ENCODE measurements at regions of chr2 and their contacts with region 1.

Region 1: DNA sequence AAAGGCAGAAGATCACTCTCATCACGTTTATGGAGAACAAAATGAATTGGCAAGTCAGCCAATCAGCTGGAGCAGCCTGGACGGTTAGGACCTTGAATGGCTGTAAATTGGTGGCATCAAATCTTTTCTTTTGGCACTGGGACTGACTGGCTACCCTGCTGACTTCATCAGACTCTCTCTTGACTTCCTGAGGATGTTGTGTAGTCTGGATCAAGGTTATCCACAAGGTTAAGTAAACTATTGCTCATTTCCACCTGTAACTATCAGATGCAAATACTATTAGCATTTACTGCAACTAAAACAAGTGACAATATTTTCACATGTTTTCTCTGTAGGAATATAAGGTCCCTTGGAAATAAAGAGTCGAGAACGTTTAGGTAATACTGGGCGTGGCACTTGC is 134.3 kb upstream of the RASGRP3 start:
- DNase-seq: peak; percentile 98
- H3K4me3 ChIP-seq: no peak overlapping the region
- H3K27ac ChIP-seq: peak overlapping the region; percentile 99
- H3K4me1 ChIP-seq: peaks cover 28% of the 10 kb centered on the region
- H3K27me3 ChIP-seq: no peaks in the 10 kb centered on the region
- CTCF ChIP-seq: no peak
- POLR2A ChIP-seq: peak; percentile 40

Region 2: DNA sequence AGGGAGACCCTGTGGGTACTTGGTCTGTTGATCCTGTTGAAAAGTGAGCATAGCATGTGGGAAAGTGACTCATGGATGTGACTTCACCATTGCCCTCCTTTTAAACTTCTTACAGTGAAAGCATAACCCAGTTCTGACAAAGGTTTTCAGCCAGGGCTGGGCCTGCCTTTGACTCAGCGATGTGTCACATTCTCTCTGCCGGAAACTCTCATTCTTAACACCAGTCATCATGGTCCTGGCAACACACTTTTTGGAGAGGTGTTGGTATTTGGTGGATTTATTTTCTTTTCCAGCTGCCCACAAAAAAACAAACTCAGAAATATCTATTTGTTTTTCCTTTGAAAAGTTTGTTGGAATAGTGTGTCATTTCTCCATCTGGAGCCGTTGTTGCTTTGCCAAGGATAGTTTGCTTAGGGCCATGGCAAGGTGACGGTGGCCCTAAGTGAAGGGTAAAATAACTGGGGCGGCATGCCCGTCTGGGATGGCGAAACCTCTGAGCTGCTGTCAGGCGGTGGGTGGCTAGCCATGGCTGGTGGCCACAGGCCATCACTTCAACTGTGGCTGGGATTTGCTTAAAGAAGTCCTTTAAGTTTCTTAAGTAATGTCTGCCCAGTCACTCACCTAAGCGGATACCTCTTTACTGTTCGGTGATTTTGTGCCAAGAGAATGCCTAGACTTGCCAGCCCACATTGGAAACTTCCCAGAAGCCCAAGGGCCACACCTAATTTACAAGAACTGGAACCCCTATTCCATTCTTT is 272.1 kb before region 1 on chr2:
- CTCF ChIA-PET with region 1: no interaction called
- POLR2A ChIA-PET with region 1: no interaction called
- dilution Hi-C with region 1: no loop called
- intact Hi-C with region 1: loop called (anchors 2 kb)
- DNase-seq: peak; percentile 98
- H3K4me3 ChIP-seq: no peak overlapping the region
- H3K27ac ChIP-seq: peak overlapping the region; percentile 98
- H3K4me1 ChIP-seq: peaks cover 60% of the 10 kb centered on the region
- H3K27me3 ChIP-seq: no peaks in the 10 kb centered on the region
- CTCF ChIP-seq: no peak
- POLR2A ChIP-seq: no peak

Region 3: GRCh38 chr2:33126958-33127357 is 215.2 kb before region 1 on chr2:
- CTCF ChIA-PET with region 1: no interaction called
- POLR2A ChIA-PET with region 1: no interaction called
- dilution Hi-C with region 1: no loop called
- intact Hi-C with region 1: no loop called
- DNase-seq: no peak
- H3K4me3 ChIP-seq: no peak overlapping the region
- H3K27ac ChIP-seq: no peak overlapping the region
- H3K4me1 ChIP-seq: no peaks in the 10 kb centered on the region
- H3K27me3 ChIP-seq: no peaks in the 10 kb centered on the region
- CTCF ChIP-seq: no peak
- POLR2A ChIP-seq: no peak

Region 4: GRCh38 chr2:33167622-33168250 is 174.4 kb before region 1 on chr2:
- CTCF ChIA-PET with region 1: no interaction called
- POLR2A ChIA-PET with region 1: no interaction called
- dilution Hi-C with region 1: no loop called
- intact Hi-C with region 1: no loop called
- DNase-seq: no peak
- H3K4me3 ChIP-seq: no peak overlapping the region
- H3K27ac ChIP-seq: no peak overlapping the region
- H3K4me1 ChIP-seq: peaks cover 16% of the 10 kb centered on the region
- H3K27me3 ChIP-seq: no peaks in the 10 kb centered on the region
- CTCF ChIP-seq: no peak
- POLR2A ChIP-seq: no peak

Region 5: DNA sequence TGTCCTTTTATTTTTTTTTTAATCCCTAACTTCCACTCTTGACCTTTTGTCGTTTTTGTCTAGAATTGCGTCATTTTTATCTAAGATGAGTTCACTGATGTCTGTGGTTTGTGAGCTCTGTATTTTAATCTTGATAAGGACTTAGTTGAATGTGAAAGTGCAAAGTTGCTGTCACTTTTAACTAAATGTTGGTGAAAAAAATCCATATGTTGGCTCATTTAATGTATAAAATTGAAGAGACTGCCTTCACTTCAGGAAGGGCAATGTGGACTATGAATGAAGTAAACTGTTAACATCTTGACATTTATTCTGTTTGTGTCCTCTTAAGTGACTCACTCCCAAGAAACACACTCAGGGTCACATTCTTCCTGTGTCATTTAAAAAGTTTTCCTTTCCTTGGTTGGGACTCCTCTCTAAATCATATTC is 122.3 kb before region 1 on chr2:
- CTCF ChIA-PET with region 1: no interaction called
- POLR2A ChIA-PET with region 1: no interaction called
- dilution Hi-C with region 1: no loop called
- intact Hi-C with region 1: no loop called
- DNase-seq: peak; percentile 41
- H3K4me3 ChIP-seq: no peak overlapping the region
- H3K27ac ChIP-seq: peak overlapping the region; percentile 60
- H3K4me1 ChIP-seq: peaks cover 25% of the 10 kb centered on the region
- H3K27me3 ChIP-seq: no peaks in the 10 kb centered on the region
- CTCF ChIP-seq: no peak
- POLR2A ChIP-seq: no peak

Region 6: DNA sequence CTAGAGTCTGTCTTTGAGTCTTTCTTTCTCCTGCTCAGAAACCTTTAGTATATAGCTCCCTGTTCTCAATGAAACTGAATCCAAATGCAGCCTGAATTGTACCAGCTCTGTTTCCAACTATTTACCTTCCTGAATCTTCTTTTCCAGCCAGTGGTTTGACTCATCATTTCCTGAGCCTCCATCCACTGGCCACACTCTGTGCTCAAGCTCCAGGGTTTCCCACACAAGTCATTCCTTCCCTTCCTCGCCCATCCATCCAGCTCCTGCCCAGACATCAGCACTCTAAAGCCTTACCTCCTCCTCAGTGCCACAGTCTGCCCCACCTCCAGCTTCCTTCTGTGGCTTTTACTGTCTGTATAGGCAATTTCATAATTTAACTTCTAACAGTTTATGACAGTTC is 99.3 kb before region 1 on chr2:
- CTCF ChIA-PET with region 1: no interaction called
- POLR2A ChIA-PET with region 1: no interaction called
- dilution Hi-C with region 1: no loop called
- intact Hi-C with region 1: loop called (anchors 1 kb)
- DNase-seq: peak; percentile 90
- H3K4me3 ChIP-seq: no peak overlapping the region
- H3K27ac ChIP-seq: peak overlapping the region; percentile 72
- H3K4me1 ChIP-seq: peaks cover 48% of the 10 kb centered on the region
- H3K27me3 ChIP-seq: no peaks in the 10 kb centered on the region
- CTCF ChIP-seq: no peak
- POLR2A ChIP-seq: no peak